Tibial artery (tissue), 4 donors: ENCODE measurements at regions of chrX and their contacts with region 1.

Region 1: GRCh38 chrX:54044126-54044876 is at the start of gene PHF8:
- DNase-seq: peak; percentile 92 to 98
- H3K4me3 ChIP-seq: peak within 1 kb of the TSS; percentile 83 to 85
- H3K27ac ChIP-seq: peak within 1 kb of the TSS; percentile 93 to 99
- H3K4me1 ChIP-seq: no peaks in the 10 kb centered on the region
- H3K27me3 ChIP-seq: no peaks in the 10 kb centered on the region
- CTCF ChIP-seq: no peak

Region 2: GRCh38 chrX:53256446-53257041 is 787.8 kb before region 1 on chrX:
- intact Hi-C with region 1: no loop called
- DNase-seq: no peak
- H3K4me3 ChIP-seq: no peak overlapping the region
- H3K27ac ChIP-seq: no peak overlapping the region
- H3K4me1 ChIP-seq: no peaks in the 10 kb centered on the region
- H3K27me3 ChIP-seq: no peaks in the 10 kb centered on the region
- CTCF ChIP-seq: no peak

Region 3: GRCh38 chrX:54182864-54183608 is 138.7 kb after region 1 on chrX and contains the start of gene FAM120C:
- intact Hi-C with region 1: loop called (anchors 10 kb)
- DNase-seq: peak; percentile 49 to 84
- H3K4me3 ChIP-seq: peak within 1 kb of the TSS; percentile 92
- H3K27ac ChIP-seq: peak within 1 kb of the TSS; percentile 87 to 95
- H3K4me1 ChIP-seq: peaks cover 0 to 33% (median 7%) of the 10 kb centered on the region in 4 donors
- H3K27me3 ChIP-seq: no peaks in the 10 kb centered on the region
- CTCF ChIP-seq: no peak

Region 4: GRCh38 chrX:54817220-54817820 is 773.0 kb after region 1 on chrX:
- intact Hi-C with region 1: loop called (anchors 10 kb)
- DNase-seq: no peak
- H3K4me3 ChIP-seq: no peak overlapping the region
- H3K27ac ChIP-seq: no peak overlapping the region
- H3K4me1 ChIP-seq: no peaks in the 10 kb centered on the region
- H3K27me3 ChIP-seq: no peaks in the 10 kb centered on the region
- CTCF ChIP-seq: no peak